GM23248 (cell line): ENCODE measurements at regions of chr1 and their contacts with region 1.

Region 1: GRCh38 chr1:207259391-207259790 is 62.1 kb upstream of the CD55 start:
- DNase-seq: peak; percentile 46
- H3K4me3 ChIP-seq: no peak overlapping the region
- H3K27ac ChIP-seq: no peak overlapping the region
- H3K4me1 ChIP-seq: no peaks in the 10 kb centered on the region
- H3K27me3 ChIP-seq: no peaks in the 10 kb centered on the region

Region 2: DNA sequence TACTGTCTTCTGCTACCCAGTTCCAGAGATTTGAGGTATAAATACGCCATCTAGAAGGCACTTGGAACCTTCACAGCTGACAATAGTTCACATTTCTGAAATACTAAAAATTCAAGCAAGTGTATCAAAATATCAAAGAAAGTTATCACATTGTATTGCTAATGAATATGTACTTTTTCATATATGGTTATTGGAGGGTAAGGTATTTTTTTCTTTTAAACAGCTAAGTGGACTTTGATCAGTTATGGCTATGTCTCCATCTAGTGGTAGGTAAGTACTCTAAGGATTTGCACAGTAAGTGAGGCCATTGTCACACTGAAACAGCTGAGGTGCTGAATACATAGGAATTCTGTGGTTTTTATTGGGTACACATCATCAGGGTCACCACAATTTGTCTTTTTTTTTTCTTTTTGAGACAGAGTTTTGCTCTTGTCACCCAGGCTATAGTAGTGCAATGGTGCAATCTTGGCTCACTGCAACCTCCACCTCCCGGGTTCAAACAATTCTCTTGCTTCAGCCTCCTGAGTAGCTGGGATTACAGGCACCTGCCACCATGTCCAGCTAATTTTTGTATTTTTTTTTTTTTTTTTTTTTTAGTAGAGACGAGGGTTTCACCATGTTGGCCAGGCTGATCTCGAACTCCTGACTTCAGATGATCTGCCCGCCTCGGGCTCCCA is 145.6 kb after region 1 on chr1:
- in situ Hi-C with region 1: loop called (anchors 10 kb)
- DNase-seq: peak; percentile 86
- H3K4me3 ChIP-seq: no peak overlapping the region
- H3K27ac ChIP-seq: no peak overlapping the region
- H3K4me1 ChIP-seq: peaks cover 8% of the 10 kb centered on the region
- H3K27me3 ChIP-seq: no peaks in the 10 kb centered on the region

Region 3: GRCh38 chr1:207486198-207486597 is 226.8 kb after region 1 on chr1:
- in situ Hi-C with region 1: no loop called
- DNase-seq: no peak
- H3K4me3 ChIP-seq: no peak overlapping the region
- H3K27ac ChIP-seq: no peak overlapping the region
- H3K4me1 ChIP-seq: no peaks in the 10 kb centered on the region
- H3K27me3 ChIP-seq: no peaks in the 10 kb centered on the region; the same call in 1 of the 2 replicates